ENCODE measurements at regions of chr21 and their contacts with region 1.

Region 1: GRCh38 chr21:25584833-25585676 is 22.2 kb downstream of the MRPL39 start:
- DNase-seq: no peak
- ATAC-seq: no peak
- H3K4me3 ChIP-seq: no peak overlapping the region
- H3K27ac ChIP-seq: no peak overlapping the region
- H3K4me1 ChIP-seq: no peaks in the 10 kb centered on the region
- H3K27me3 ChIP-seq: no peaks in the 10 kb centered on the region
- CTCF ChIP-seq: no peak
- EP300 ChIP-seq: no peak
- POLR2A ChIP-seq: peak; percentile 46; the same call in 1 of the 2 replicates
- RAD21 ChIP-seq: no peak

Region 2: GRCh38 chr21:25573409-25574206 is 11.4 kb before region 1 on chr21:
- CTCF ChIA-PET with region 1: no interaction called
- POLR2A ChIA-PET with region 1: interaction called, 3 read pairs
- RAD21 ChIA-PET with region 1: no interaction called
- SMC1A ChIA-PET with region 1: interaction called, 10 read pairs
- in situ Hi-C with region 1: no loop called
- intact Hi-C with region 1: no loop called
- DNase-seq: peak; percentile 81
- ATAC-seq: peak; percentile 38
- H3K4me3 ChIP-seq: peak overlapping the region; percentile 14; the same call in 1 of the 2 replicates
- H3K27ac ChIP-seq: peak overlapping the region; percentile 92
- H3K4me1 ChIP-seq: peaks cover 38% of the 10 kb centered on the region
- H3K27me3 ChIP-seq: no peaks in the 10 kb centered on the region
- CTCF ChIP-seq: no peak
- EP300 ChIP-seq: no peak
- POLR2A ChIP-seq: peak; percentile 80
- RAD21 ChIP-seq: no peak

Region 3: DNA sequence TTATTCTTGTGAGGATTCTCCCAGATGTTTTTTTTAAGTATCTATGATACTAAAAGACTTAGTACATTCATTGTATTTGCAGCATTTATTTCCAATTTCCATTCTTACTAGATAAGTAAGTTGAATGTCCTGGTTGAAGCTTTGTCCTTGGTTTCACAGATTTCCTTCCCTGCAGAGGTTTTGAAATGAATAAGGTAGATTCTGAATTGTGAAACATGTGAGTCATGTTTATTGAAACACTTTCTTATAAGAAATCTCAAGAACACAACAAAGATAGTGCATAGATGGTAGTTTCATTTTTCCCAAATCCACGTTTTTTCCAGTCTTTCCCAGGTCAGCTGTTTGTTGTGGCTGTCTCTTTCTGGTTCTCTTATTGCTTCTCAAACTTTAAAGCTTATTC is 174.5 kb after region 1 on chr21:
- CTCF ChIA-PET with region 1: no interaction called
- POLR2A ChIA-PET with region 1: no interaction called
- RAD21 ChIA-PET with region 1: no interaction called
- SMC1A ChIA-PET with region 1: no interaction called
- in situ Hi-C with region 1: no loop called
- intact Hi-C with region 1: no loop called
- DNase-seq: no peak
- ATAC-seq: no peak
- H3K4me3 ChIP-seq: no peak overlapping the region
- H3K27ac ChIP-seq: no peak overlapping the region
- H3K4me1 ChIP-seq: peaks cover 5% of the 10 kb centered on the region
- H3K27me3 ChIP-seq: no peaks in the 10 kb centered on the region
- CTCF ChIP-seq: no peak
- EP300 ChIP-seq: no peak
- POLR2A ChIP-seq: no peak
- RAD21 ChIP-seq: no peak

Measured in GM12878 (cell line).